Activated naive CD4-positive, alpha-beta T cell treated with anti-CD3 and anti-CD28 coated beads for 36 hours (primary cell): ENCODE measurements at regions of chr16 and their contacts with region 1.

Region 1: GRCh38 chr16:54936979-54937670 is 6.5 kb downstream of the IRX5 start:
- DNase-seq: peak; percentile 42
- H3K4me3 Mint-ChIP-seq: peak overlapping the region; percentile 47
- H3K27ac Mint-ChIP-seq: no peak overlapping the region
- H3K4me1 Mint-ChIP-seq: peaks cover 27% of the 10 kb centered on the region
- H3K27me3 Mint-ChIP-seq: peaks cover 82% of the 10 kb centered on the region

Region 2: GRCh38 chr16:53773150-53773846 is 1163.8 kb before region 1 on chr16:
- CTCF ChIA-PET with region 1: no interaction called
- intact Hi-C with region 1: loop called (anchors 5 kb)
- DNase-seq: peak; percentile 40
- H3K4me3 Mint-ChIP-seq: no peak overlapping the region
- H3K27ac Mint-ChIP-seq: no peak overlapping the region
- H3K4me1 Mint-ChIP-seq: peaks cover 31% of the 10 kb centered on the region
- H3K27me3 Mint-ChIP-seq: no peaks in the 10 kb centered on the region

Region 3: GRCh38 chr16:55257966-55258613 is 321.0 kb after region 1 on chr16:
- CTCF ChIA-PET with region 1: no interaction called
- intact Hi-C with region 1: loop called (anchors 5 kb)
- DNase-seq: peak; percentile 69
- H3K4me3 Mint-ChIP-seq: no peak overlapping the region
- H3K27ac Mint-ChIP-seq: no peak overlapping the region
- H3K4me1 Mint-ChIP-seq: peaks cover 2% of the 10 kb centered on the region
- H3K27me3 Mint-ChIP-seq: peaks cover 11% of the 10 kb centered on the region

Region 4: DNA sequence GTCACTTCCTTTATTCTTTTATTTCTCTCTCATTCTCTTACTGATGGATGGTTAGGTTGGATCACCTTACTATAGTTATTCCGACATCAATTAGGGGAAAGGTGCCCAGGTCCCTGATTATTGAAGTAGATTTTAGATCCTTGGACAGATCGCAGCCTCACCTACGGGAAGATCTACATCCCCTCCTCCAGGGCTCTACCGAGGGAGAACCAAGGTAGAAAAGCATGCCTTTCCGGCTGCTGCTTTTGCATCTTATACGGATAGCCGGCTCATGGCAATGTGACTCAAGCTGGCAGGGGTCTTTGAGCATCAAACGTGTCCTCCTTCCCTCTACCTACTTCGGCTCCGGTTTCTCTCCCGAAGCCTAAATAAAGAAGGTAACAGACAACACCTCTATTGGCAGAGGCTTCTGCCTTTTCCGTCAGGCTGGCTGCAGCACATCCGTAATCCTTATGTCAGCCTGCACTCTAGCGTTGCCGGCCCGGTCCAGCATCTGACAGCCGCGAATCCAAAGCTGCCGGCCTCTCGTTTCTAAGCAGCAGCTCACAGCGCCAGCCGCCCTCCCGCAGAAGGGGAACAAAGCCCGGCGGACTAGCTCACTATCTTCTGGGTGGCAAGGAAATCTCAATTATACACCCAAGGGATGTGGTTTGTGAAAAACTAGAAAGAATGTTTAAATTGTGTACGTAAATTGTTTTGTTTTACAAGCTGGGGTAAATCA is 433.8 kb after region 1 on chr16:
- CTCF ChIA-PET with region 1: no interaction called
- intact Hi-C with region 1: loop called (anchors 5 kb)
- DNase-seq: peak; percentile 37
- H3K4me3 Mint-ChIP-seq: no peak overlapping the region
- H3K27ac Mint-ChIP-seq: no peak overlapping the region
- H3K4me1 Mint-ChIP-seq: peaks cover 1% of the 10 kb centered on the region
- H3K27me3 Mint-ChIP-seq: peaks cover 47% of the 10 kb centered on the region